Heart right ventricle (tissue), 16 donors: ENCODE measurements at regions of chr5 and their contacts with region 1.

Region 1: GRCh38 chr5:141420855-141421496 is at the start of gene PCDHGA11:
- DNase-seq: no peak
- ATAC-seq: peak in 4 of 8 donors; percentile 34 to 60 (median 42)
- H3K4me3 ChIP-seq: peak within 1 kb of the TSS in 9 of 10 donors; percentile 6 to 42 (median 34)
- H3K27ac ChIP-seq: no peak within 1 kb of the TSS
- H3K4me1 ChIP-seq: peaks cover 0 to 25% (median 6%) of the 10 kb centered on the region in 9 donors
- H3K27me3 ChIP-seq: peaks cover 0 to 99% (median 0%) of the 10 kb centered on the region in 7 donors
- CTCF ChIP-seq: peak; percentile 23 to 60 (median 49)
- total RNA-seq, gene PCDHGA11: 3.3 to 8.5 (median 5.4) TPM

Region 2: DNA sequence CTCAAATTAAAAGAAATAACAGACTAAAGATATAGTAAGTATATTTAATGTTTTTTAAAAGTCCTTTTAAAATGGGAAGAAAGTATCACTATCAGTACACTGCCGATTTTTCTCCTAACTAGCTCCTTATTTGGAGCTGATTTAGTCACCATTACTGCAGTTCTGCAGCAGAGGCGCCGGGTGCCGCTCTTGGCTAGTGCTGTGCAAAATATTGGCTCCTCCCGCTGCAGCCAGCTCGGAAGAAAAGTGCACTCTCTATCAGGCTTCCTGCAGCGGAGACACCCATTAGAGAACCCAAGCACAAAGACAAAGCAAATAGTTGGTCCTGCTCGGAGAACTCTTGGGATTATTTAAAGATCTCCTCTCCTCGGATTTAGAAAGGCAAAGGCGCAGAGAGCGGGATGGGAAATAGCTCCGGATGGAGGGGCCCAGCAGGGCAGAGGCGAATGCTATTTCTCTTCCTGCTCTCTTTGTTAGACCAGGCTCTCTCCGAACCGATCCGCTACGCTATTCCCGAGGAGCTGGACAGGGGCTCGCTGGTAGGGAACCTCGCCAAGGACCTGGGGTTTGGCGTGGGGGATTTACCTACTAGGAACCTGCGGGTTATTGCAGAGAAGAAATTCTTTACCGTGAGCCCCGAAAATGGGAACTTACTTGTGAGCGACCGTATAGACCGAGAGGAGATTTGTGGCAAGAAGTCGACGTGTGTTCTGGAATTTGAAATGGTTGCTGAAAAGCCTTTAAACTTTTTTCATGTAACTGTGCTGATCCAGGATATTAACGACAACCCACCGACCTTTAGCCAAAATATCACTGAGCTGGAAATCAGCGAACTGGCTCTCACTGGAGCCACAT is 50.8 kb before region 1 on chr5 and contains the start of gene PCDHGB3:
- intact Hi-C with region 1: loop called in 1 of 10 experiments (anchors 2 kb)
- DNase-seq: no peak
- ATAC-seq: peak; percentile 80 to 94 (median 88)
- H3K4me3 ChIP-seq: peak within 1 kb of the TSS in 7 of 10 donors; percentile 6 to 43 (median 37)
- H3K27ac ChIP-seq: peak within 1 kb of the TSS in 4 of 10 donors; percentile 21 to 57 (median 44)
- H3K4me1 ChIP-seq: peaks cover 0 to 39% (median 0%) of the 10 kb centered on the region in 9 donors
- H3K27me3 ChIP-seq: peaks cover 0 to 81% (median 0%) of the 10 kb centered on the region in 7 donors
- CTCF ChIP-seq: peak in 7 of 9 donors; percentile 31 to 62 (median 43)
- total RNA-seq, gene PCDHGB3: 7.0 to 14.0 (median 9.3) TPM

Region 3: GRCh38 chr5:141713616-141714309 is 292.8 kb after region 1 on chr5:
- intact Hi-C with region 1: no loop called
- DNase-seq: no peak
- ATAC-seq: peak in 6 of 8 donors; percentile 21 to 49 (median 44)
- H3K4me3 ChIP-seq: no peak overlapping the region
- H3K27ac ChIP-seq: peak overlapping the region in 1 of 10 donors; percentile 23
- H3K4me1 ChIP-seq: peaks cover 0 to 21% (median 11%) of the 10 kb centered on the region in 9 donors
- H3K27me3 ChIP-seq: peaks cover 0 to 19% (median 5%) of the 10 kb centered on the region in 7 donors
- CTCF ChIP-seq: no peak